HEK293 (cell line): ENCODE measurements at regions of chr6 and their contacts with region 1.

Region 1: DNA sequence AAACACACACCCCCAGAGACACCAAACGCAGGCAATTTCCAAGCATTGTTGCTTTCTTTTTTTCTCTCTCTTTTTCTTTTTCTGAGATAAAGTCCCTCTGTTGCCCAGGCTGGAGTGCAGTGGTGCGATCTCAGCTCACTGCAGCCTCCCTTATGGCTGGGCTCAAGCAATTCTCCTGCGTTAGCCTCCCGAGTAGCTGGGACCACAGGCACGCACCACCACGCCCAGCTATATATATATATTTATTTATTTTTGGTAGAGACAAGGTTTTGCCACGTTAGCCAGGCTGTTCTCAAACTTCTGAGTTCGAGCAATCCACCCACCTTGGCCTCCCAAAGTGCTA is 14.0 kb upstream of the SRSF3 start:
- H3K4me3 ChIP-seq: no peak overlapping the region
- H3K27ac ChIP-seq: no peak overlapping the region
- H3K4me1 ChIP-seq: peaks cover 6% of the 10 kb centered on the region; the same call in 1 of the 2 replicates
- CTCF ChIP-seq: no peak

Region 2: DNA sequence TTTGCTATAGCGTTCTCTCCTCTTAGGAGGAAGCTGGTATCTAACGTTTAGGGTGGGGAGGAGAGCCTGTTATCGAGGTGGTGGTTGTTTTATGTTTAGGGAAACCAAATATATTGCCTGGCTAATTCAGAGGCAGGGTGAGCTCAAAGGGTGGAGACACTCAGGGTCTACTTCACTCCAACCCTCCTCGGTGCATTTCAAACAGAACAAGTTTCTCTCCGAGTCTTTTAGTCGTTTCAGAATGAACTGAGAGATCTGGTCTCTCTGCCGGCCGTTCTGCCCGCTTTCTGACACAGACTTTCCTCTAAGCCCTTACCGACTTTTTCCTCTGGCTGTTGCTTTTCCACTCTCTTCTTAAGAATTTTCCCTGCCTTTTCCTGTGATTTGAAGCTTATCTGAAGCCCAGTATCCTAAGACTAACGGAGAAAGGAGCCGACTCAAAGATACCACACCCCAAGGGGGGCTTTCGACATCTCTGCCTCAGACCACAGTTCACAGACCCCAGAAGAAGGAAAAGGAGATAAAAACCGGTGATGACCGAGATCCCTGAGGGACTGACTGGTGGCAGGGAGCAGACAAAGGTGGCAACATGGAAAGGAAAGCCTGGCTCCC is 33.7 kb before region 1 on chr6:
- CTCF ChIA-PET with region 1: interaction called, 5 read pairs
- POLR2A ChIA-PET with region 1: interaction called, 11 read pairs
- H3K4me3 ChIP-seq: peak overlapping the region; percentile 97
- H3K27ac ChIP-seq: peak overlapping the region; percentile 95
- H3K4me1 ChIP-seq: peaks cover 10% of the 10 kb centered on the region; the same call in 1 of the 2 replicates
- CTCF ChIP-seq: no peak

Region 3: GRCh38 chr6:36594029-36594815 is 14.1 kb after region 1 on chr6 and contains the start of gene SRSF3:
- CTCF ChIA-PET with region 1: interaction called, 5 read pairs
- POLR2A ChIA-PET with region 1: interaction called, 12 read pairs
- H3K4me3 ChIP-seq: peak within 1 kb of the TSS; percentile 90
- H3K27ac ChIP-seq: peak within 1 kb of the TSS; percentile 89
- H3K4me1 ChIP-seq: peaks cover 10% of the 10 kb centered on the region; the same call in 1 of the 2 replicates
- CTCF ChIP-seq: peak; percentile 95